ENCODE measurements at regions of chr16 and their contacts with region 1.

Region 1: DNA sequence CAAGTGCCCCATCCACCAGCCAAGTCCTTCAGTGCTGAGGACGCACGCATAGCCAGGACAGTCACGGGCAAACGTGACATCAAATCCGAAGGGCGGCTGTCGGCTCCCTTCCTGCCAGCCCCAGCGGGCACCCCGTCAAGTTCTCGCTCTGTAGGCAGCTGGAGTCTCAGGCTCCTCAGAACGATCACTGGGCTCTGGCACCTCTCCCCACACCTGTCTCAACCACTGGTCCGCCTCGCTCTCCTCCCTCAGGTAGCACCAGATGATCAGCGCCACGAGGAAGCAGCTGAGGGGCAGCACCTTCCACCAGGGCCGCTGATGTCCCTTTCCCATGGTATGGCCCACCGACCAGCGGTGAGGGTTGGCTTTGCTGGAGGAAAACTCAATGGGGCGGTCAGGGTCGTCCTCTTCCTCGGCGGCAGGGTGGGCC is 421 bp downstream of the UQCC4 start:
- DNase-seq: peak in 1 of 10 donors; percentile 15
- H3K4me3 ChIP-seq: peak overlapping the region; percentile 75 to 99 (median 94)
- H3K27ac ChIP-seq: peak overlapping the region in 51 of 59 donors; percentile 39 to 98 (median 93)
- H3K27me3 ChIP-seq: no peaks in the 10 kb centered on the region
- CTCF ChIP-seq: no peak

Region 2: DNA sequence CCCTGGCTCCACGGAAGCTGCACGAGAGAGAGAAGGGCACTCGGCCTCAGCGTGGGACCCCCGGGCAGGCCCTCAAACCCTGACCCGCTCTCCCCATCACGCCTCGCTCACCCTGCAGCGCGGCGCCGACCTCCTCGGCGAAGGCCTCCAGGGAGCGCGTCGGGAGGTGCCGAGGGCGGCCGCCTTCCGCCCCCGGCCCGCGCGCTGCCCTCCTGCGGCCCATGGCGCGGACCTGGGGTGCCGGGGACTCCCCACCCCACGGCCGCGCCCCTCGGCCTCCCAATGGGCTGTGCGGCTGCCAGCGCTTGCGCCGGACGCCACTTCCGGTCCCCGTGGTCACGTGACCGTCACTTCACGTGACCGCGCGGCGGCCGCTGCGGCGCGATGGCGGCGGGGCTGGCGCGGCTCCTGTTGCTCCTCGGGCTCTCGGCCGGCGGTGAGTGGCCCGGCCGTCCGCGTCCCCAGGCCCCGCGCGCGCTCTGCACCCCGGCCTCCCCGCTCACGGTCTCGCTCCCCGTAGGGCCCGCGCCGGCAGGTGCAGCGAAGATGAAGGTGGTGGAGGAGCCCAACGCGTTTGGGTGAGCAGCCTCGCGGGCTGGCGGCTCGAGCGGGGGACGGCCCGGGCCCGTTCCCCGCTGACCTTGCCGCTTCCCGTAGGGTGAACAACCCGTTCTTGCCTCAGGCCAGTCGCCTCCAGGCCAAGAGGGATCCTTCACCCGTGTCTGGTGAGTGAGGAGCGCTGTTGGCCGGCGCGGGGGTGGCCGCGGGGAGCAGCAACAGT is 68.4 kb before region 1 on chr16 and contains the starts of genes GNPTG and TSR3:
- intact Hi-C with region 1: loop called (anchors 5 kb)
- DNase-seq: peak; percentile 38 to 91 (median 68)
- H3K4me3 ChIP-seq: peak within 1 kb of the TSS; percentile 75 to 100 (median 99)
- H3K27ac ChIP-seq: peak within 1 kb of the TSS in 54 of 59 donors; percentile 5 to 95 (median 80)
- H3K27me3 ChIP-seq: no peaks in the 10 kb centered on the region
- CTCF ChIP-seq: peak in 16 of 56 donors; percentile 5 to 55 (median 20)
- total RNA-seq, gene GNPTG: 85.9 to 151 (median 118) TPM
- total RNA-seq, gene TSR3: 30.3 to 68.2 (median 46.8) TPM

Region 3: GRCh38 chr16:1464530-1465219 is 44.5 kb after region 1 on chr16:
- intact Hi-C with region 1: no loop called
- DNase-seq: no peak
- H3K4me3 ChIP-seq: no peak overlapping the region
- H3K27ac ChIP-seq: no peak overlapping the region
- H3K27me3 ChIP-seq: no peaks in the 10 kb centered on the region
- CTCF ChIP-seq: no peak

Region 4: GRCh38 chr16:1474796-1475551 is 54.8 kb after region 1 on chr16 and contains the start of gene CLCN7:
- intact Hi-C with region 1: loop called in 1 of 2 experiments (anchors 2 kb)
- DNase-seq: peak; percentile 74 to 94 (median 88)
- H3K4me3 ChIP-seq: peak within 1 kb of the TSS; percentile 68 to 100 (median 97)
- H3K27ac ChIP-seq: peak within 1 kb of the TSS; percentile 70 to 98 (median 93)
- H3K27me3 ChIP-seq: no peaks in the 10 kb centered on the region
- CTCF ChIP-seq: peak in 32 of 56 donors; percentile 5 to 63 (median 33)
- total RNA-seq, gene CLCN7: 75.5 to 169 (median 114) TPM

Region 5: DNA sequence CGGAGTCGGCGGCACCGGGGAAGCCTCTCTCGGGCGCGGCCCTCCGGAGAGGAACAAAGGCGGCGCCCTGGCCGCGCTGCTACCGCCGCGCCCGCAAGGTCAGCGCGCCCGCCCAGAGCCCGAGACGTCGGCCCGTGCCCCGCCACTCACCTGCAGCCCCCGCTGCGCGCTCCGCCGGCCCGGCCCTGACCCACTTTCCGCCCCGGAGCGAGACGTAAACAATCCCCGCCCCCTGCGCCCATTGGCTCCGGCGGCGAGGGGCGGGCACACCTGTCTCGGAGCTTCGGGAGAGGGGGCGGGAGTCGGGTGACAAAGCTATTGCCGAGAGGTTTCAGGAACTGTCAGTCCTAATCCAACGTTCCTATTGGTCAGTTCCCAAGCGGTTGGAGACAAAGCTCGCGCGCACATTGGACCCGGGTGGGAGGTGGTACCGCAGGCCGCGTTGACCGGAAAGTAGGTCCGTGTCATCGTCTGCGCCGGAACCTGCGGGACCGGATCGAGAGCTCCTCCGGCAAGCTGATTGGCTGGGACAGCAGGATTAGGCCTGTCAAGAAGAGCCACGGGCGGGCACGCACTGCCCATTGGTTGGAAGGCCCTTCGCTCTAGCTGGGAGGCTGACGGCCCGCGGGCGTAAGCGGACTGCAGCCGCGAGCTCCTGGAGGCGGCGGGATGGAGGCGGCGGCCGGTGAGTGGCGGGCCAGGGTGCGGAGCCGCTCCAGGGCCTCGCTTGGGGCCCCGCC is 362.4 kb after region 1 on chr16 and contains the starts of genes NUBP2 and SPSB3:
- intact Hi-C with region 1: loop called in 1 of 2 experiments (anchors 5 kb)
- DNase-seq: peak; percentile 100
- H3K4me3 ChIP-seq: peak within 1 kb of the TSS; percentile 64 to 99 (median 89)
- H3K27ac ChIP-seq: peak within 1 kb of the TSS in 54 of 59 donors; percentile 23 to 93 (median 84)
- H3K27me3 ChIP-seq: no peaks in the 10 kb centered on the region
- CTCF ChIP-seq: peak in 10 of 56 donors; percentile 13 to 33 (median 22)
- total RNA-seq, gene NUBP2: 29.7 to 55.7 (median 39.2) TPM
- total RNA-seq, gene SPSB3: 34.3 to 62.3 (median 48.9) TPM

Measured in dorsolateral prefrontal cortex (tissue), 120 donors.